Caco-2 (cell line): ENCODE measurements at regions of chr7 and their contacts with region 1.

Region 1: DNA sequence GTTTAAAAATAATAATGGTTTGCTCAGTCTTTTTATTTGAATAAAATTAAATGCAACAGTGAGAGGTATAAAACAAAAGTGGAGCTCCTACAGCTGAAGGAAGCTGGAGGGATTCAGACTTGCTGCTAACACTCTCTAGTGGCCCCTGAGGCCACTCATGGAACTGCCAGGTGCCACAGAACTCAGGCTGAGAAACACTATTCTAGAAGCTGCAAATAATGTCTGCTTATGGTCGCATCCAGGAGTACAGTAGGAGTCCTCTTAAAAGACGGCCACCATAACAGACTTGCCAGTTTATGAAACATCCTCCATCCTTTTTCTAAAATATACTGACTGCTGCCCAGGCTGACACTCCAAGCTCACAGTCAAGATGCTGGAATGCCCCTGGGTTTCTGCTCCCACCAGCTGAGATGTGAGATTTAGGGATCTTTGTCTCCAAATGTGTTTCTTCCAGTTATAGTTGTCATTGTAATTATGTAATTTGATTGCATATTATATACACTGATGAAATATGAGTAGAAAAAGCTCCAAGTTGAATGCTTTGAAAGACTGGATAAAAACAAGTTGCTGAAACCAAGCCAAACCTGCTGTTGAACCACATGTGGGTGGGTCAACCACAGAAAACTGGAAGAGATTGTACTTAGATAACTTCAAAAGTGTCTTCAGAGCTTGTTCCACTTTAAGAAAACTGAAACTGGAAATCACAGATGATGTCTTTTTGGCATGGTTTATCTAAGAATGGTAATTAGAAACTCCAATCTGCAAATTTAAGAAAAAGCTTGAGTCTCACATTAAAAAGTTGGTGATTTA is 213.7 kb upstream of the AOAH start:
- DNase-seq: no peak
- H3K4me3 ChIP-seq: no peak overlapping the region
- H3K4me3 Mint-ChIP-seq: no peak overlapping the region
- H3K27ac Mint-ChIP-seq: no peak overlapping the region
- H3K4me1 ChIP-seq: no peaks in the 10 kb centered on the region
- H3K4me1 Mint-ChIP-seq: no peaks in the 10 kb centered on the region
- H3K27me3 ChIP-seq: no peaks in the 10 kb centered on the region
- H3K27me3 Mint-ChIP-seq: no peaks in the 10 kb centered on the region
- CTCF ChIP-seq: no peak

Region 2: DNA sequence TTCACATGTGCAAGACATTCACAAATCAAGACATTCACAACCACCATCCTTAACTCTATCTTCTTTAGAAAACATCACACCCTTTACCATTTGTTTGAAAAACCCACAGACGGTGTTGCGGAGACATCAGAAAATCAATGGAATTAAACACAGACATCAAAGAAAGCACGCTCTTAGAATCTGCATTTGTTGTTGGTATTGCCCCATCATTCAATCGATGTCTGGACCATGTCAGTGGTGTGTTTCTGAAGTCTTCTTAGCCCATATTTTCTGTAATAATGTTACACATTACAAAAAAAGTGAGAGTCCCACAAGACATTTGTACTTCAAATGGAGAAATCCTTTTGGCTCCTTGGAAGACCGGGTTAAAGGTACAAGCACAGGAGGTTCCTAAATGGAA is 39.8 kb before region 1 on chr7:
- CTCF ChIA-PET with region 1: no interaction called
- POLR2A ChIA-PET with region 1: no interaction called
- intact Hi-C with region 1: loop called (anchors 2 kb)
- DNase-seq: no peak
- H3K4me3 ChIP-seq: no peak overlapping the region
- H3K4me3 Mint-ChIP-seq: peak overlapping the region; percentile 26
- H3K27ac Mint-ChIP-seq: peak overlapping the region; percentile 83
- H3K4me1 ChIP-seq: peaks cover 19% of the 10 kb centered on the region
- H3K4me1 Mint-ChIP-seq: peaks cover 27% of the 10 kb centered on the region
- H3K27me3 ChIP-seq: no peaks in the 10 kb centered on the region
- H3K27me3 Mint-ChIP-seq: no peaks in the 10 kb centered on the region
- CTCF ChIP-seq: no peak

Region 3: DNA sequence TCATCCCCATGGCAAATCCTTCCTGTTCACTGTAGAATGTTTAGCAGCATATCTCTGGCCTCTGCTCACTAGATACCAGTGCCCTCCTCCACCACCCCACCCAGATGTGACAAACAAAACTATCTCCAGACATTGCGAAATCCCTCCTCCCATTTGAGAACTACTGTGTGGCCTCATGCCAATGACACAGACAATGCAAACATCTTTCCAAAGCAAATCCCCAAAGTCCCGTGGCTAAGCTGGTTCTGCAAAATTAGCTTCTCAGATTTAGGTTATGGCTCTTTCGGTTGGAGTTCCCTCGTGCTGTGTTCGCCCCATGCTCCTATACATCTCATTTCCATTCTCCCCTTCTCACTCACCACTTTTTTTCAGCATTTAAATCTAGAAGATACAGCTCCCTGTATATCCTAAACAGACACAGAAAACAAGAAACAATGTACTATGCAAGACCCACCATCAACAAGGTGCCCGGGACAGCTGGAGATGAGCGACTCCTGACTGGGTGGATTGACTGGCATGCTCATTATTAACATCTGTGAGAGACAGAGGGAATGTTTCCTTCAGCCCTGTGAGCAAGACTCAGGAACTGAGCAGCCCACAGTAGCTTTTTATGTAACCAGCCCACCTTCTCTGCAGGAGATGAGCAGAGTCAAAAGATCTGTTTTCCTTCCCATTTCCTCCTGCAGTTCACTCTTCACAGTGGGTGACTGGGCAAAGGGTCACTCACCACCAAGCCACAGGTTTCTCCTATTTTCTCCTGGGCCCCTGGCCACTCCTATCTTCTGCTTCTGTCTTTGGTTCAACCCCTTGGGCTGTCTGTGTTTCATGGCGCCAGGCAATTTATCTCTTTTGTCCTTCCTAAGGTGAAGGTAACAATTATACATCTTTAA is 12.0 kb after region 1 on chr7:
- CTCF ChIA-PET with region 1: no interaction called
- POLR2A ChIA-PET with region 1: no interaction called
- intact Hi-C with region 1: no loop called
- DNase-seq: peak; percentile 61 to 65
- H3K4me3 ChIP-seq: no peak overlapping the region
- H3K4me3 Mint-ChIP-seq: no peak overlapping the region
- H3K27ac Mint-ChIP-seq: peak overlapping the region; percentile 29
- H3K4me1 ChIP-seq: peaks cover 44% of the 10 kb centered on the region
- H3K4me1 Mint-ChIP-seq: peaks cover 26% of the 10 kb centered on the region
- H3K27me3 ChIP-seq: no peaks in the 10 kb centered on the region
- H3K27me3 Mint-ChIP-seq: no peaks in the 10 kb centered on the region
- CTCF ChIP-seq: no peak